Mammary epithelial cell (primary cell): ENCODE measurements at regions of chr9 and their contacts with region 1.

Region 1: DNA sequence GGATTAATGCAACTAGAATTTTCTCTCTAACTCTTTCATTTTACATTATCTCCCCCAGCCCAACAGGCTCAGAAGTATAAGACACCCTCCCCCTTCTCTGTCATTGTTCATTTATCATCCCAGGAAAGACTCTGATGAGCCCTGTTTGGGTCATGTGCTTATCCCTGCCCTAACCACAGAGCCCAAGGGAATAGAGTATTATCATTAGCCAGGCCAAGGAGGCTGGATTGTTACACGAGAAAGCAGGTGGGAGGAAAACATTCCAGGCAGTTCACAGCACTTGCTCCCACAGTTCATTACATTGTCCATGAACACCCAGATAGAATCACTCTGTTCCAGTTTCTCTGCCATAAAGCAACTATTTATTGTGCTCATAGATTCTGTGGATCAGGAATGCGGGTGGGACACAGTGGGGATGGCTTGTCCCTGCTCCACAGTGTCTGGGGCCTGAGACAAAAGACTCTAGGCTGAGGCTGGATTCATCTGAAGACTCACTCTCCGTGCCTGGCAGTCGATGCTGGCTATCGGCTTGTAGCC is 59.5 kb upstream of the TMEM215 start:
- DNase-seq: no peak
- H3K4me3 ChIP-seq: no peak overlapping the region
- H3K27ac ChIP-seq: no peak overlapping the region
- H3K4me1 ChIP-seq: no peaks in the 10 kb centered on the region
- H3K27me3 ChIP-seq: no peaks in the 10 kb centered on the region
- CTCF ChIP-seq: no peak

Region 2: DNA sequence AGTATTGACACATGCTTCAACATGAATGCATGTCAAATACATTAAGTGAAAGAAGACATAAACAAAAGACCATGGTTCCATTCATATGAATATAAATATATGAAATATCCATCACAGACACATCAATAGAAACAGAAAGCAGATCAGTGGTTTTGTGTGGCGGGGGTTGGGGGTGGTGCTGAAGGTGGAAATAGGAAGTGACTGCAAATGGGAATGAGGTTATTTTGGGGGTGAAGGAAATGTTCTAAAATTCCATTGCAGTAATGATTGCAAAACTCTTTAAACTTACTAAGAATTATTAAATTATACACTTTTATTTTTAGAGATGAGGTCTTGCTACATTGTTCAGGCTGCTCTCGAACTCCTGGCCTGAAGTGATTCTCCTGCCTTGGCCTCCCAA is 117.0 kb before region 1 on chr9:
- CTCF ChIA-PET with region 1: no interaction called
- dilution Hi-C with region 1: loop called (anchors 5 kb)
- in situ Hi-C with region 1: no loop called
- intact Hi-C with region 1: no loop called
- DNase-seq: no peak
- H3K4me3 ChIP-seq: no peak overlapping the region
- H3K27ac ChIP-seq: no peak overlapping the region
- H3K4me1 ChIP-seq: no peaks in the 10 kb centered on the region
- H3K27me3 ChIP-seq: no peaks in the 10 kb centered on the region
- CTCF ChIP-seq: no peak

Region 3: DNA sequence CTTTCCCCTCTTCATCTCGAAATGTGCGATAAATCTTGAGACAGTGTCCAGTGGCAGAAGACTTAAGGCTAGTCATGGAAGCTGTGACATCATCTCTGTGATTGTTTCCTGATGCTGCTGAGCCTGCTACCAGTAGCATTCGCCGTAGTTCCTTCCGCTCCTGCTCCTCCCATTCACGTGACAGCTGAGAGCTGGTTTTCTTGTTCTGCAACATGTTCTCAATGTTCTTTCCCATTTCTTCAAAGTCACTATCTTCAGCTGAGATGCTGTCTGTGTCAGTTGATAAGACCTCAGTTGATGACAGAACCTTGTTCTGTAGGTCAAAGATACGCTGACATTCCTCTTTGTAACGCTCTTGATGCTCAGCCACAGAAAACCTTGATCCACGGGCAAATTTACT is 91.9 kb before region 1 on chr9:
- CTCF ChIA-PET with region 1: no interaction called
- dilution Hi-C with region 1: loop called (anchors 5 kb)
- in situ Hi-C with region 1: no loop called
- intact Hi-C with region 1: no loop called
- DNase-seq: no peak
- H3K4me3 ChIP-seq: no peak overlapping the region
- H3K27ac ChIP-seq: no peak overlapping the region
- H3K4me1 ChIP-seq: peaks cover 8% of the 10 kb centered on the region
- H3K27me3 ChIP-seq: no peaks in the 10 kb centered on the region
- CTCF ChIP-seq: no peak